CD4-positive, alpha-beta memory T cell (primary cell): ENCODE measurements at regions of chr12 and their contacts with region 1.

Region 1: DNA sequence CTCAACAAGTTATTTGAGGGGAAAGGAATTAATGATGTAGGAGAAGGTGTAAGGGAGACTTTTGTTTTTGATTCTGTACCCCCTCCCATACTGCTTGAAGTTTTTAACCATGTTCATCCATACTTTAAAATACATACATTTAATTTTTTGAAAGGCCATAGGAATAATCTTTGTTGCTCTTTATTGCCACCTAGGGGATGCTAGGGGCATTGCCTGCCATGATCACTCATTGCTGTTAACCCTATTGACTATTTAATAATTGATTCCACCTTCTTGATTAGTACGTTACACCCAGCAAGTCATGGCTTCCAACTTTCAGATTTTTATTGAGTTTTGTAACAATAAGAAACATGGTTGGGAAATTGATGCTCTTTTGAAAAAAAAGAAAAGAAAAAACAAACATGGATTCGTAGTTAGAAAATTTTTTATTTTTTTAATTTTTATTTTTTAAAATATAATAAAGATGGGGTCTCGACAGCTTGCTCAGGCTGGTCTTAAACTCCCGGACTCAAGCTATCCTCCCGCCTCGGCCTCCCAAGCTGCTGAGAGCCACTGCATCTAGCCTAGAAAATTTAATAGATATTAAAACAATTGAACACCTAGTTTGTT is 8.5 kb upstream of the PRKAB1 start:
- DNase-seq: peak; percentile 48 to 61 (median 51)
- H3K4me3 ChIP-seq: no peak overlapping the region
- H3K4me3 Mint-ChIP-seq: no peak overlapping the region
- H3K27ac ChIP-seq: no peak overlapping the region
- H3K27ac Mint-ChIP-seq: no peak overlapping the region
- H3K4me1 ChIP-seq: peaks cover 5% of the 10 kb centered on the region
- H3K4me1 Mint-ChIP-seq: peaks cover 3 to 12% (median 4%) of the 10 kb centered on the region in 4 donors
- H3K27me3 ChIP-seq: no peaks in the 10 kb centered on the region
- H3K27me3 Mint-ChIP-seq: no peaks in the 10 kb centered on the region

Region 2: DNA sequence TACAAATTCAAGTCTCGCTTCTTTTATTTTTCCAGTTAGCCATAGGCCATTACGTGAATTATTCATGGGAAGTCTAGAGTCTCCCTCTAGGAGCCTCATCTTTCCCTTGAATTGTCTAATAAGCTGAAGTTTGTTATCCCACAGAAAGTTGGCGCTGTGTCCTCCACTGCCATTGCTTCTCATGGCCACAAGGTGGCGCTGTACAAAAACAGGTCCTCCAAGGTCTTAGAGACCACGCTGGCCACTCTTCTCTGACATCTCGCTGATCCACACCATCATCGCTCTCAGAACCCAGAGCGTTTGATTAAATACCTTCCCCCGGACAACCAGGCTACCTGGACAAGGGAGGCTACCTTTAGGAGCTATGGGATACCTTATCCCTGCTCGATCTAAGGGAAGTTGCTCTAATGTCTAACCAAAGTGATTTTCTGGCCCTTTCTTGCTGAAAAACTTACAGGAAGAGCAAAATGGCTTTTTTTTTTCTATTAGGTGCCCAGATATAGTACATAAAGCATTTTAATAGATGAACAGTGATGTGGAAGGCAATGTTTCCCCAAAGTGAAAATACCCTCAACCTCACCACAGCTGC is 214.8 kb before region 1 on chr12:
- CTCF ChIA-PET with region 1: no interaction called
- POLR2A ChIA-PET with region 1: no interaction called
- intact Hi-C with region 1: loop called (anchors 10 kb)
- DNase-seq: peak in 4 of 5 donors; percentile 3 to 8 (median 6)
- H3K4me3 ChIP-seq: no peak overlapping the region
- H3K4me3 Mint-ChIP-seq: no peak overlapping the region
- H3K27ac ChIP-seq: no peak overlapping the region
- H3K27ac Mint-ChIP-seq: no peak overlapping the region
- H3K4me1 ChIP-seq: no peaks in the 10 kb centered on the region
- H3K4me1 Mint-ChIP-seq: peaks cover 0 to 3% (median 0%) of the 10 kb centered on the region in 4 donors
- H3K27me3 ChIP-seq: no peaks in the 10 kb centered on the region
- H3K27me3 Mint-ChIP-seq: peaks cover 5 to 15% of the 10 kb centered on the region in 2 donors

Region 3: GRCh38 chr12:119649202-119649808 is 10.1 kb before region 1 on chr12:
- CTCF ChIA-PET with region 1: interaction called, 22 read pairs
- POLR2A ChIA-PET with region 1: no interaction called
- intact Hi-C with region 1: no loop called
- DNase-seq: peak in 1 of 5 donors; percentile 11
- H3K4me3 ChIP-seq: no peak overlapping the region
- H3K4me3 Mint-ChIP-seq: no peak overlapping the region
- H3K27ac ChIP-seq: no peak overlapping the region
- H3K27ac Mint-ChIP-seq: no peak overlapping the region
- H3K4me1 ChIP-seq: no peaks in the 10 kb centered on the region
- H3K4me1 Mint-ChIP-seq: no peaks in the 10 kb centered on the region
- H3K27me3 ChIP-seq: no peaks in the 10 kb centered on the region
- H3K27me3 Mint-ChIP-seq: peaks cover 5 to 6% of the 10 kb centered on the region in 2 donors

Region 4: GRCh38 chr12:120710031-120710804 is 1050.8 kb after region 1 on chr12 and contains the start of gene UNC119B:
- CTCF ChIA-PET with region 1: no interaction called
- POLR2A ChIA-PET with region 1: no interaction called
- intact Hi-C with region 1: no loop called
- DNase-seq: peak; percentile 66 to 78 (median 70)
- H3K4me3 ChIP-seq: peak within 1 kb of the TSS; percentile 49 to 68
- H3K4me3 Mint-ChIP-seq: peak within 1 kb of the TSS; percentile 89 to 96 (median 94)
- H3K27ac ChIP-seq: peak within 1 kb of the TSS; percentile 78
- H3K27ac Mint-ChIP-seq: peak within 1 kb of the TSS; percentile 83 to 98 (median 93)
- H3K4me1 ChIP-seq: peaks cover 26% of the 10 kb centered on the region
- H3K4me1 Mint-ChIP-seq: peaks cover 17 to 41% (median 32%) of the 10 kb centered on the region in 4 donors
- H3K27me3 ChIP-seq: no peaks in the 10 kb centered on the region
- H3K27me3 Mint-ChIP-seq: no peaks in the 10 kb centered on the region
- total RNA-seq, gene UNC119B: 28.7 to 29.1 TPM